Uterus (tissue), 4 donors: ENCODE measurements at regions of chr2 and their contacts with region 1.

Region 1: DNA sequence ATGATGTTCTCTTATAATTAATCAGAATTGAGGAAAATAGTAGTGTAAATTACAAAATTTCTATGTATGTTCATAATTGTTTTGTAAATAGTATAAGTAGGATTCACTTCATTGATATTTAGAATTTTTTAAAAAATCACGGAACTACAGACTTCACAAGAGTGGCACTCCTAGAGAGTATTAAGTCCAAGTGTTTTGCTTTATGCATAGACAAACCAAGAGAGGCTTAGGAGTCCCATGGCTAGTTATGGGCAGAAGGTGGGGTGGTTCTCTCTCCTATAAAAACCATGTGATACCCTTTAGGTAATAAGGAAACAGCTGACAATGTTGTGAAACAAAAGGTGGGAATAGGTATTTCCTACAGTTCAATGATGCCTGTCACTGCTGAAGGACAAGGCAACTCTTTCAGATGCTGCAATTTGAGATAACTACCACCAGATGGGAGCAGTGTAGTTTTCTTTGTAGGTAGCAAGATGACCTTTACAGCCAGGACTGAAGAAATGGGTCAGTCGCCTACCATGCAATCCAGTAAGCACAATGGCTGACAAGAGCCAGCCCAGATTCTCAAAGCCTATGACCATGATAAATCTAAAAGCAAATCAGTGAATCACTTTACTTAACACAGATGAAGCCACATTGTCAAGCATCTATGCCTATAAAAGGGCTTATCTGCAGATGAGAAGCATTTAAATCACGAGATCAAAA is 83.9 kb downstream of the AAK1 start:
- DNase-seq: no peak
- H3K4me3 ChIP-seq: no peak overlapping the region
- H3K27ac ChIP-seq: no peak overlapping the region
- H3K4me1 ChIP-seq: no peaks in the 10 kb centered on the region
- H3K27me3 ChIP-seq: no peaks in the 10 kb centered on the region
- CTCF ChIP-seq: peak; percentile 36 to 69 (median 52)
- POLR2A ChIP-seq: no peak

Region 2: GRCh38 chr2:69714024-69714423 is 154.4 kb after region 1 on chr2:
- intact Hi-C with region 1: loop called (anchors 5 kb)
- DNase-seq: no peak
- H3K4me3 ChIP-seq: no peak overlapping the region
- H3K27ac ChIP-seq: no peak overlapping the region
- H3K4me1 ChIP-seq: no peaks in the 10 kb centered on the region
- H3K27me3 ChIP-seq: no peaks in the 10 kb centered on the region
- CTCF ChIP-seq: no peak
- POLR2A ChIP-seq: no peak